GM13976 (cell line): ENCODE measurements at regions of chr5 and their contacts with region 1.

Region 1: GRCh38 chr5:170267431-170268152 is 30.0 kb downstream of the LCP2 start:
- DNase-seq: peak; percentile 84
- CTCF ChIP-seq: peak; percentile 82

Region 2: GRCh38 chr5:170338933-170339779 is 71.6 kb after region 1 on chr5:
- in situ Hi-C with region 1: loop called (anchors 5 kb)
- DNase-seq: peak; percentile 77
- CTCF ChIP-seq: peak; percentile 88